ENCODE measurements at regions of chr14 and their contacts with region 1.

Region 1: GRCh38 chr14:68808696-68809480 is 16.0 kb upstream of the ZFP36L1 start:
- DNase-seq: no peak
- ATAC-seq: no peak
- H3K4me3 ChIP-seq: no peak overlapping the region
- H3K27ac ChIP-seq: no peak overlapping the region
- H3K4me1 ChIP-seq: no peaks in the 10 kb centered on the region
- H3K27me3 ChIP-seq: no peaks in the 10 kb centered on the region
- CTCF ChIP-seq: no peak

Region 2: DNA sequence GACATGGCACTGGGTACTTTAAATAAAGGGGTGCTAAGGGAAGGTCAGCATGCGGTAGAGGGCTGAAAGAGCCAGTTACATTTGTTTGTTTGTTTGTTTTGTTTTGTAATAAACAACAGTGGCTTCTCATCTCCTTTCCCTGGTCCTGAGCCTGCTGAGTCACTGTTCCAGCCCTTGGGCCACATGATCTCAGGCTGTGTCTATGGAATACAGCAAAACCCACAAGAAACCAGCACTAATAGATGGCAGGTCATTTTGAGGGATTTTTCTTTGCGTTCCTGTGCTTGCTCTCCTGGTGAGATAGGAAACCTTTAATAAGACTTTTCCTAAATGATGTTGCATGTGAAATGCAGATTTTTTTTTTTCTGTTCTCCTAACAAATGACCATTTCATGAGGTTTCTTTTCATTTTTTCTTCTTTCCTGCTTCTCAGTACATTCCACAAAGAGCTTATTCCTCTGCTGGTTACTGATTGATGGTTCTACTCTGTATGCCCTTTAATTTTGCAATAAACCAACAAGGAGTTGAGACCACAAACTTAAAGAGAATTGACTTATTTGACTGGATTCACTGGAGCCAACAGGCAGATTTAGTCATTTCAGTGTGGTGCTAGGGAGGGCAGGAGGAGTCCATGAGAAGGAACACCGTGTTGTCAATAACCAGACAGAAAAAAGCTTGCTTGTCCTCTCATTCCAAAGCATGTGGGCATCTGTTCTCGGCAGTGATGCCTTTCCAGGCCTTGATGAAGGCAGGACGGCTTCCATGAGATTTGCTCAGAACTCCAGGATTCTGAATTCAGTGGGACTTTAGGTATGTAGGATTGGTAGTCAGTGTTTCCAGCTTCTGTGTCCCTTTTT is 530.1 kb before region 1 on chr14:
- CTCF ChIA-PET with region 1: no interaction called
- POLR2A ChIA-PET with region 1: interaction called, 12 read pairs
- intact Hi-C with region 1: no loop called
- DNase-seq: peak; percentile 63
- ATAC-seq: peak; percentile 73
- H3K4me3 ChIP-seq: no peak overlapping the region
- H3K27ac ChIP-seq: no peak overlapping the region
- H3K4me1 ChIP-seq: peaks cover 14% of the 10 kb centered on the region
- H3K27me3 ChIP-seq: no peaks in the 10 kb centered on the region
- CTCF ChIP-seq: no peak

Region 3: DNA sequence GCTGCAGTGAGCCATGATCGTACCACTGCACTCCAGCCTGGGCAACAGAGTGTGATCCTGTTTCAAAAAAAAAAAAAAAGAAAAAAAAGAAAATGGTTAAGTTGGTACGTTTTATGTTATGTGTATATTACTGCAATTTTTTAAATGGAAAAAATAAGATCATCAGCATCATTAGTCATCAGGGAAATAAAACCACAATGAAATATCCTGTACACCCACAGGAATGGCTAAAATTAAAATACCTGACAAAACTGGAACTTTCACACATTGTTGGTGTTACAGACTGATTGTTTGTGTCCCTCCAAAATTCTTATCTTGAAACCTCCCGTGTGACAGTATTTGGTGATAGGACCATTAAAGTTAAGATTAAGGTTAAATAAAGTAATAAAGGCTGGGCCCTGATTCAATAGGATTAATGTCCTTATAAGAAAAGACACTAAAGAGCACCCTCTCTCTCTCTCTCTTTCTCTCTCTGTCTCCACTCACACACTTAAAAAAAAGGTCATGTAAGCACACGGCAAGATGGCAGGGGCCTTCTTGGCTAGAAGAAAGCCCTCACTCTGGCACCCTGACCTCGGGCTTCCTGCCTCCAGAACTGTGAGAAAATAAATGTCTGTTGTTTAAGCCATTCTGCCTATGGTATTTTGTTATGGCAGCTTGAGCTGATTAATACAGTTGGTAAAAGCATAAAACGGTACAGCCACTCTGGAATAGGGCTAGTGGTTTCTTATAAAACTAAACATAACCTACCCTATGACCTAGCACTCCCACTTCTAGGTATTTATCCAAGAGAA is 32.3 kb after region 1 on chr14:
- CTCF ChIA-PET with region 1: no interaction called
- POLR2A ChIA-PET with region 1: no interaction called
- intact Hi-C with region 1: no loop called
- DNase-seq: peak; percentile 32
- ATAC-seq: peak; percentile 59
- H3K4me3 ChIP-seq: no peak overlapping the region
- H3K27ac ChIP-seq: no peak overlapping the region
- H3K4me1 ChIP-seq: peaks cover 14% of the 10 kb centered on the region
- H3K27me3 ChIP-seq: no peaks in the 10 kb centered on the region
- CTCF ChIP-seq: no peak